SK-N-SH (cell line): ENCODE measurements at regions of chr3 and their contacts with region 1.

Region 1: GRCh38 chr3:186540221-186540834 is 3.9 kb downstream of the CRYGS start:
- DNase-seq: peak; percentile 49
- H3K4me3 ChIP-seq: peak overlapping the region in 1 of 2 experiments; percentile 31; a peak in 2 of 4 replicates
- H3K27ac ChIP-seq: peak overlapping the region in 1 of 2 experiments; percentile 85; a peak in 2 of 4 replicates
- H3K4me1 ChIP-seq: peaks cover 12 to 20% of the 10 kb centered on the region in 2 experiments
- H3K27me3 ChIP-seq: no peaks in the 10 kb centered on the region
- CTCF ChIP-seq: peak; percentile 88
- EP300 ChIP-seq: no peak
- RAD21 ChIP-seq: peak; percentile 94

Region 2: DNA sequence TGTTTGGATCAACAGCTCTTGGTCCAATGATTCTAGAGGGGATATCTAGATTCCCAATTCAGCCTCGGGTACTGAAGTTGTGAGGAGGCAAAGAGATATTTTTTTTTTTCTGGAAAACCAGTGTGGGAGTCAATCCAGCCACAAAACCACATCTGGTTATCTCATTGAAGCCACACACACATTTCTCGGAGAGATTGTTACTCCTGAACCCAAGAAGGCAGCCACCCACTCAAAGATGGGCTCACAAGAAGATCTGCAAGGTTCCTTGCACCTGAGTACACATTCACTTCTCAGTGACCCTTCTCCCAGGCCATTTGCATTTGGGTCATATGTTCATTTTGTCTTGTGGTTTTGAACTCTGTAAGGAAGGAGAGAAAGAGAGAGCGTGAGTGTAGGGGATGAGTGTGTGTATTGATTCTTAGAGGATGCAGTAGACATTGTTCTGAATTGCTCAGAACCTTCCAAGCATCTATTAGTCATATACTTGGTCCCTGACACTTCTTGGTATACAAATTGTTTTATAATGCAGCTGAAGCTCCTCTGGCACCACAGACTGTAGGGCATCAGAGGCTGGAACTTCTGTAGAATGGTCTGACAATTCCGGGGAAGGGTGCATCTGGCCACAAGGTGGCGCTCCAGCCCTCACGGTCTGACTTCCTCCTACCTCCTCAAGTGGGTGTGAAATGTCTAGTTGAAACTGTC is 563.2 kb before region 1 on chr3:
- CTCF ChIA-PET with region 1: interaction called, 70 read pairs
- POLR2A ChIA-PET with region 1: no interaction called
- DNase-seq: peak; percentile 70
- H3K4me3 ChIP-seq: no peak overlapping the region; a peak in 1 of 4 replicates
- H3K27ac ChIP-seq: no peak overlapping the region
- H3K4me1 ChIP-seq: no peaks in the 10 kb centered on the region
- H3K27me3 ChIP-seq: no peaks in the 10 kb centered on the region
- CTCF ChIP-seq: peak; percentile 96
- EP300 ChIP-seq: no peak
- RAD21 ChIP-seq: peak; percentile 73

Region 3: DNA sequence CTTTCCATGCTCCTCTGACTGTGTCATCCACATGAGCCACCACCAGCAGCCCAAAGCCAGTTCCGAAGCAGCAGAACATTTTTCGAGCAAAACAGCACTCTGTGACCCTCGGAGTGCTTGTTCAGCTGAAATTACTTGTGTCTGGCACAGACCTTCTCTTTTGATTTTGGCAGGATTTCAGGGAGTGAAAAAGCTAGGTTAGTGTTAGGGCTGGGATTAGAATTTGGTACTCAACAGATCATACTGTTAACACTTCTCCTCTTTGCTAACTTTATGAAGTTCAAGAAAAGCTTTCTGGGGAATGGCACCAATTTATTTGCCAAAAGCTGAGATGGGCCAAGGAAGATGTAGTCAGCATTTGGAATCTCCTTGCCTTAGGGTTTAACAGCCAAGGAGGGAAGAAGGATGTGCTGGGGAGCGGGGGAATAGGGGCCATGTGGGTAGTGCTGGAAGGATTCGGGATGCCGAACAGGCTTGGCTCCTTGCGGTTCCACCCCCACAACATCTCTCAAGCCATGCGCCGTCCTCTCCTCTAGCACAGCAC is 547.4 kb before region 1 on chr3:
- CTCF ChIA-PET with region 1: interaction called, 31 read pairs
- POLR2A ChIA-PET with region 1: no interaction called
- DNase-seq: no peak
- H3K4me3 ChIP-seq: no peak overlapping the region
- H3K27ac ChIP-seq: no peak overlapping the region
- H3K4me1 ChIP-seq: no peaks in the 10 kb centered on the region; a peak in 1 of 4 replicates
- H3K27me3 ChIP-seq: peaks cover 7% of the 10 kb centered on the region
- CTCF ChIP-seq: no peak
- EP300 ChIP-seq: no peak
- RAD21 ChIP-seq: no peak

Region 4: GRCh38 chr3:186259612-186260383 is 280.5 kb before region 1 on chr3:
- CTCF ChIA-PET with region 1: interaction called, 242 read pairs
- POLR2A ChIA-PET with region 1: interaction called, 7 read pairs
- DNase-seq: peak; percentile 90
- H3K4me3 ChIP-seq: peak overlapping the region in 1 of 2 experiments; percentile 17; a peak in 1 of 4 replicates
- H3K27ac ChIP-seq: peak overlapping the region in 1 of 2 experiments; percentile 55; a peak in 1 of 4 replicates
- H3K4me1 ChIP-seq: peaks cover 0 to 11% of the 10 kb centered on the region in 2 experiments; a peak in 1 of 4 replicates
- H3K27me3 ChIP-seq: no peaks in the 10 kb centered on the region; the same call in 1 of the 2 replicates
- CTCF ChIP-seq: peak; percentile 80
- EP300 ChIP-seq: no peak
- RAD21 ChIP-seq: peak; percentile 88

Region 5: DNA sequence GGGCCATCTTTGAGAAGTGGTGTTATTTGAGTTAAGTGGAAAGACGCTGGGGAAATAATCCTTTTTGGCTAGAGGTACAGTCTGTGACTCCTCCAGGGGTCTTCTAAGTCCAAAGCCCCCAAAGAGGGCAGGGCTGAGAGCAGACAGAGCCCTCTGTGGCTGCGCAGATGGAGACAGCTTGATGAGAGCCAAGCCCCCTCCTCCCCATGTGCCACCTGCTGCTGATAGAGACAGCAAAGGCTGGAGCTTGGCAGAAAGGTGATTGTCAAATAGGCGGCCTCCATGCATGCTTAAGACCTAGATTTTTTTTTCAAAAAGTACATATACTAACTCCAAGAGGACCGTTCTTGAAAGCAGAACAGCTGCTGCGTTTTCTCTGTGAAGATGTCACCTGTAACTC is 68.6 kb before region 1 on chr3:
- CTCF ChIA-PET with region 1: interaction called, 10 read pairs
- POLR2A ChIA-PET with region 1: no interaction called
- DNase-seq: no peak
- H3K4me3 ChIP-seq: no peak overlapping the region
- H3K27ac ChIP-seq: no peak overlapping the region
- H3K4me1 ChIP-seq: peaks cover 0 to 21% of the 10 kb centered on the region in 2 experiments; a peak in 1 of 4 replicates
- H3K27me3 ChIP-seq: peaks cover 8% of the 10 kb centered on the region; the same call in 1 of the 2 replicates
- CTCF ChIP-seq: no peak
- EP300 ChIP-seq: no peak
- RAD21 ChIP-seq: no peak